ENCODE measurements at regions of chrX and their contacts with region 1.

Region 1: GRCh38 chrX:23782863-23783568 is at the start of gene SAT1:
- DNase-seq: peak; percentile 98
- H3K4me3 Mint-ChIP-seq: peak within 1 kb of the TSS; percentile 95
- H3K27ac Mint-ChIP-seq: peak within 1 kb of the TSS; percentile 95
- H3K4me1 Mint-ChIP-seq: peaks cover 25% of the 10 kb centered on the region
- H3K27me3 Mint-ChIP-seq: no peaks in the 10 kb centered on the region
- total RNA-seq, gene SAT1: 58.3 and 59.9 TPM in 2 replicates

Region 2: DNA sequence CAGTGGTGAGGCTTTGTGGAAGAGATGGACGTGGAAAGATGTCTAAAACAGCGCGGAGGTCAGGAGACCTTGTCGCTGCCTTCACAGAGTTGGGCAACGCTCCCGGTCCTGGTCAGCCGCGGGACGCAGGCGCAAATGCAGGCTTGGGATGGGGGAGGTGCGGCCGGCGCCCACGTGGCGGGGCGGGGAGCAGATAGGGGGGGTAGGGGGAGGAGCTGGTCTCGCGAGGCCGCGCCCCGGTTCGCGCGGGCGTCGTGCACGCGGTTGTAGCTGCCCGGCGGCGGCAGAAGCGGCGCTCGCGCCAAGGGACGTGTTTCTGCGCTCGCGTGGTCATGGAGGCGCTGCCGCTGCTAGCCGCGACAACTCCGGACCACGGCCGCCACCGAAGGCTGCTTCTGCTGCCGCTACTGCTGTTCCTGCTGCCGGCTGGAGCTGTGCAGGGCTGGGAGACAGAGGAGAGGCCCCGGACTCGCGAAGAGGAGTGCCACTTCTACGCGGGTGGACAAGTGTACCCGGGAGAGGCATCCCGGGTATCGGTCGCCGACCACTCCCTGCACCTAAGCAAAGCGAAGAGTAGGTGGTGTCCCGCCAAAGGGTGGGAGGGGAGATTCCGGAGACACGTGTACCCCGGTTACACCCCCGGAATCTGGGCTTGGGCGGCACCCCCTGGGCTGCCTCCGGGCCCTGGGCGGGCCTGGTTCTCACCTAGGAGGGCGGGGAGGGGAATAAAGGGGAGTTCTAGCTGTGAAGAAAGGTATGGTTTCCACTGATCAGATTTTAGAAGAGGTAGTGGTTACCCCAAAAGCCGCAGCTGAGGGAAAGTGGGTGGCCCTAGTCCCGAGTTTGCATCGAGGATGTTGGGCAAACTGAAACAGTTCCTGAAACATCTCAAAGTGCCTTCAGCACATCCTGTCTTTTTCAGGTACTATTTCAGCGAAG is 115.5 kb before region 1 on chrX and contains the start of gene PRDX4:
- intact Hi-C with region 1: loop called (anchors 1 kb)
- DNase-seq: peak; percentile 91
- H3K4me3 Mint-ChIP-seq: peak within 1 kb of the TSS; percentile 89
- H3K27ac Mint-ChIP-seq: peak within 1 kb of the TSS; percentile 93
- H3K4me1 Mint-ChIP-seq: peaks cover 16% of the 10 kb centered on the region
- H3K27me3 Mint-ChIP-seq: no peaks in the 10 kb centered on the region
- total RNA-seq, gene PRDX4: 76.4 and 80.3 TPM in 2 replicates

Region 3: DNA sequence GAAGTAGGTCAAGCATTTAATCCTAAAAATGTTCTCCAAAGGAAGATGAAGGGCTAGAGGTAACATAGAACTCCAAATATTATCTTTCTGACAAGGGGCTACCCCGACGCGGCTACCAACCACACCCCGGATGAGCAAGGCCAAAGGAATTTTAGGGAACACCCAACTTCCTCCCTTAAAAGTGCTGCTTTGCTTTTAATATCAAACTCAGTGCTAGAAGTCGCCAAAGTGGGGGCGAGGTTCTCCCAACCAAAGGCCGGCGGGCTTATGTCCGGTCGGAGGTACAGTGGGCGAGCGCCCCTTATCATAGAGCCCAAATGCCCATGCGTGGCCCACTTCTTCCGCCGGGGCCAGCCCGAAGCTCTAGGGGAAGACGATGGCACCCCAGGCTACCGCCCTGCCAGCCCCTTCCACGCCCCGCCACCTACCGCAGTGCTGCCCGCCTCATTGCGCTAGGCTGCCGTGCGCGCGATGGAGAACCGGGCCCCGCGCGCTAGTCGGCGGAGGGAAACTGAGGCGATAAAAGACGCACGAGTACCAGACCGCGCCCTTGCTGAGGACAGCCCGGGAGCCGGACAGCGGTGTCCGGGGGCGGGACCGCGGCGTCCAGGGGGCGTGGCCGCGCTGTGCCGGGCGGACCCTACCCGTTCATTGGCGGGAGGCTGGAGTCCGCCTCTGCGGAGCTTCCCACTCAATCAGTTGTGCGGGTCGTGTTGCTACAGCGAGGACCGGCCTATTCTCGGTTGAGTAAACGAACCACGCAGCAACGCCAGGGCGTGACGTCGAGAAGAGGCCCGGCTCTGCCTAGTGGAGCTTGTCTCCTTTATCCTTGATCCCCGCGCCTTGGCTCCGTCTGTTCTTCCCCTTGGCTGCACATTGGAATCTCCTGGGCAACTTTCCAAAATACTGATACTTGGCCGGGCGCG is 40.1 kb before region 1 on chrX and contains the start of gene ACOT9:
- intact Hi-C with region 1: loop called (anchors 1 kb)
- DNase-seq: peak; percentile 94
- H3K4me3 Mint-ChIP-seq: peak within 1 kb of the TSS; percentile 93
- H3K27ac Mint-ChIP-seq: peak within 1 kb of the TSS; percentile 91
- H3K4me1 Mint-ChIP-seq: peaks cover 21% of the 10 kb centered on the region
- H3K27me3 Mint-ChIP-seq: no peaks in the 10 kb centered on the region
- total RNA-seq, gene ACOT9: 53.3 and 54.6 TPM in 2 replicates

Region 4: DNA sequence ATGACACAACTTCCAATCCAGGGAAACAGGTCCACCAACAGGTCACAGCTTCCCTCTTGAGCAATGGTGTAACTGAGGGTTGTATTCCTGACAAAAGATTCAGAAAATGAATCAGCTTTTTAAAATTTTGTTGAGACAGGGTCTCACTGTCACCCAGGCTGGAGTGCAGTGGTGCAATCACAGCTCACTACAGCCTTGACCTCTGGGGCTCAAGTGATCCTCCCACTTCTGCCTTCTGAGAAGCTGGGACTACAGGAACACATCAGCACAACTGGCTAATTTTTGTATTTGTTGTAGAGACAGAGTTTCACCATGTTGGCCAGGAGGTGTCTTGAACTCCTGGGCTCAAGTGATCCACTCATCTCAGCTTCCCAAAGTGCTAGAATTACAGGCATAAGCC is 43.6 kb after region 1 on chrX:
- intact Hi-C with region 1: no loop called
- DNase-seq: no peak
- H3K4me3 Mint-ChIP-seq: no peak overlapping the region
- H3K27ac Mint-ChIP-seq: no peak overlapping the region
- H3K4me1 Mint-ChIP-seq: no peaks in the 10 kb centered on the region
- H3K27me3 Mint-ChIP-seq: no peaks in the 10 kb centered on the region

Region 5: GRCh38 chrX:23901805-23902204 is 118.8 kb after region 1 on chrX:
- intact Hi-C with region 1: loop called (anchors 1 kb)
- DNase-seq: peak; percentile 81
- H3K4me3 Mint-ChIP-seq: no peak overlapping the region
- H3K27ac Mint-ChIP-seq: no peak overlapping the region
- H3K4me1 Mint-ChIP-seq: peaks cover 11% of the 10 kb centered on the region
- H3K27me3 Mint-ChIP-seq: no peaks in the 10 kb centered on the region

Region 6: DNA sequence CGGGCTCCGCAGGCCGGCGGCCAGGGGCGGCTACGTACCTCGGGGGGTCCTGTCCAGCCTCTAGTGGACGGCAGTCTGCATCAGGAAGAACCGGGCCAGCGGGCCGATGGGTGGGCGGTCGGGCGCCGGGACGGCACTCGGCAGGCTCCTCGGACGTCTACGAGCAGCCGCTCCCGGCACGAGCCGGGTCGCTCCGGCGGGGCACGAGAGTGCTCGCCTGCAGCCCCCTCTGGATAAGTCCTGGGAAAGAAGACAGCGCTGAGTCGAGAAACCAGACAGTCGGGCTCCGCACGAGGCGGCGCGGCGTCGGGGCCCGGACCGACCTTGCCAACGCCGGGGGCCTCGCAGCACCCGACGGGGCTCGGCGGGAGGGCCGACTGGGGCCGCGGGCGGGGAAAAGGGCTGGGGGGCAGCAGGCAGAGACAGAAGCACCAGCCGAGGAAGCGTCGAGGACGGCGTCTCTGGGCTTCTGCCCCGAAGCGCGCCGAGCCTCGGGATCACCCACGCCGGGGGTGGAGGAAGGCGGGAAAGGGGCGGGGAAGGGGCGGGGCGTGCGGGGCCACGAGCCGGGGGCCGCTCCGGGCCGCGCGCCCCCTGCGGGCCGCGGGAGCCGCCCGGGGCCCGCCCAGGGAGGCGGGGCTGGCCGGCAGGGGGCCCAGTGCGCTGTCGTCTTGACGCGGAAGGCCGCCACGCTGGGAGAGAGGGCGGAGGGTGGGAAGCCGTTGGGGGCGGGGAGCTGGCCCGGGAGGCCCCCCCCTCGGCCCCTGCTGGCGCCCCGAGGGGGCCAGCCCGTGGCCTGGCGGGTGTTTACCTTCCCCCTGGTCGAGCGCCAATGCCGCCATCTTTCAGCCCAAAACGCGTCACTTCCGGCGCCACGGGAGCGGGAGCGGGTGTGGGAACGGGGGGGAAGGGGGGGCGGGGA is 242.1 kb after region 1 on chrX:
- intact Hi-C with region 1: loop called (anchors 1 kb)
- DNase-seq: peak; percentile 92
- H3K4me3 Mint-ChIP-seq: peak overlapping the region; percentile 85
- H3K27ac Mint-ChIP-seq: peak overlapping the region; percentile 86
- H3K4me1 Mint-ChIP-seq: peaks cover 15% of the 10 kb centered on the region
- H3K27me3 Mint-ChIP-seq: peaks cover 2% of the 10 kb centered on the region

Region 7: DNA sequence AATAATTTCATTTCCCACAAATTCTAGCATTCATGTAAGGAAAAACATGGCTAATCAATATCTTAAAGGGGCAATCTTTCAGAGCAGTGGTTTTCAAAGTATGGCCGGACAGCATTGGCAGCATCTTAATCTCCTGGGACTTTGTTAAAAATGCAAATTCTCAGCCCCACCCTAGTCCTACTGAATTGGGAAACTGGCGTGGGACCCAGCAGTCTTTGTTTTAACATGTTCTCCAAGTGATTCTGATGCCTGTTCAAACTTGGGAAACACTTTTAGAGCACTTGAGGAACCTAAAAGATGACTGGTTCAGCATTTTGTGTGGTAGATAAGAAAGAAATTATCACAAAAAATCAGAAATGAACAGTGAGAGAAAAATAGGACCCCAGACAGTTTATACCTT is 432.3 kb after region 1 on chrX:
- intact Hi-C with region 1: no loop called
- DNase-seq: no peak
- H3K4me3 Mint-ChIP-seq: no peak overlapping the region
- H3K27ac Mint-ChIP-seq: no peak overlapping the region
- H3K4me1 Mint-ChIP-seq: no peaks in the 10 kb centered on the region
- H3K27me3 Mint-ChIP-seq: no peaks in the 10 kb centered on the region

Measured in activated CD4-positive, alpha-beta T cell treated with anti-CD3 and anti-CD28 coated beads, Interleukin-2, amount 10 ng/mL, durations not matched to agents 24 days and 14 days (primary cell).